Ascending aorta (tissue), 2 donors: ENCODE measurements at regions of chr15 and their contacts with region 1.

Region 1: GRCh38 chr15:45522328-45523160 is at the start of gene SLC30A4:
- DNase-seq: peak; percentile 15 to 84
- H3K4me3 ChIP-seq: peak within 1 kb of the TSS; percentile 85 to 92
- H3K27ac ChIP-seq: peak within 1 kb of the TSS; percentile 75 to 77
- H3K4me1 ChIP-seq: peaks cover 3 to 21% of the 10 kb centered on the region in 2 donors
- H3K27me3 ChIP-seq: no peaks in the 10 kb centered on the region
- CTCF ChIP-seq: peak in 2 of 3 experiments; percentile 20 to 59
- total RNA-seq, gene SLC30A4: 3.4 TPM

Region 2: DNA sequence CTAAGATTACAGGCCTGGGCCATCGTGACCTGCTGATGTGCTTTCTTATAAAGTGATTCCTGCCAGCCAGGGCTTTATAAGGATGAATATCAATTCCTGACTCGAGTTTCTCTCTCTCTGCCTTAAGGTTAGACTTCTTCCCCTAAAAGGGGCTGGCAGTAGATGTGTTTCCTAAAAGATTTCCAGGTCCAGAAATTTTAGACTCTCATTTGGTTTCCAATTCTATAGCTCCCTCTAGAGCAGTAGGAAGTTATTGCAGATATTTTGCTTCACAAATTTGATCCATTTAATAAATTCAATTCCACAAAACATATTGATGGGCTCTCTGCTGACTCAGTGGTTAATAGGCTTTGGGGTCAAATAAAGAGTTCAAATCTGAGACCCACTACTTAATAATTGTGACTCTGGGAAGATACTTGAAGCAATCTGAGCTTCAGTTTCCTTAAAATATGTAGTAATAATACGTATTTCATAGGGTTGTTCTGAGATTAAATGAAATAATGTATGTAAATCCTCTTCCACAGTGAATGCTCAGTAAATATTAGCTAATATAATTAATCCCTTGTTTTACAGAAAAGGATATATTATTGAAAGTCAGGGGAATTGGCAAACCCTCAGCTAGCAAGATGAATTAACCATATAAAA is 784.1 kb before region 1 on chr15:
- intact Hi-C with region 1: no loop called
- DNase-seq: no peak
- H3K4me3 ChIP-seq: no peak overlapping the region
- H3K27ac ChIP-seq: no peak overlapping the region
- H3K4me1 ChIP-seq: peaks cover 0 to 7% of the 10 kb centered on the region in 2 donors
- H3K27me3 ChIP-seq: no peaks in the 10 kb centered on the region
- CTCF ChIP-seq: peak; percentile 58 to 78 (median 76)

Region 3: DNA sequence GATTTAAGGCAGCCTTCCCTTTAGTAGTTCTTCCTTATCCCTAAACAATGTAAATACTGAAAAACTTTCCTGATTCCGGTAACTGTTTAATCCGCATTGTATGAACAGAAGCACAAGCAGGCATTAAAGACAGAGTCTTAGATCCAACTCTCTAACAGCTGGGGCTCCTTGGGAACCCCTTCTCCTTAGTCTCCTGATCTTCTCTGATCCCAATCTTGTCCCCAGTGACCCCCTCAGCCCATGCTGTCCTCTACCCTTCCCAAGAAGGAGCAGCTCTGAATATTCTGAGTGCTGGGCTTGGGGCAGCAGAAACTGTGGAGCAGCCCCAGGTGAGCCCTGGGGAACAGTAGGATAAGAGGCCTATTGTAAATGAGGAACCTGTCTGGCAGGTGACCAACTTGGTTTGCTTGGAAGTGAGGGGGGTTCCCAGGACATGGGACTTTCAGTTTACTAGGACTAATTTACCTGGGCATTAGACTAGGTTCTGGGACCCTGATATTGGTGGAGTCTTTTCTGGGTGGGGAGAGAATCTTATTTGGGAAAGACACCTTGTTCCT is 13.0 kb after region 1 on chr15:
- intact Hi-C with region 1: no loop called
- DNase-seq: no peak
- H3K4me3 ChIP-seq: no peak overlapping the region
- H3K27ac ChIP-seq: no peak overlapping the region
- H3K4me1 ChIP-seq: no peaks in the 10 kb centered on the region
- H3K27me3 ChIP-seq: no peaks in the 10 kb centered on the region
- CTCF ChIP-seq: no peak

Region 4: DNA sequence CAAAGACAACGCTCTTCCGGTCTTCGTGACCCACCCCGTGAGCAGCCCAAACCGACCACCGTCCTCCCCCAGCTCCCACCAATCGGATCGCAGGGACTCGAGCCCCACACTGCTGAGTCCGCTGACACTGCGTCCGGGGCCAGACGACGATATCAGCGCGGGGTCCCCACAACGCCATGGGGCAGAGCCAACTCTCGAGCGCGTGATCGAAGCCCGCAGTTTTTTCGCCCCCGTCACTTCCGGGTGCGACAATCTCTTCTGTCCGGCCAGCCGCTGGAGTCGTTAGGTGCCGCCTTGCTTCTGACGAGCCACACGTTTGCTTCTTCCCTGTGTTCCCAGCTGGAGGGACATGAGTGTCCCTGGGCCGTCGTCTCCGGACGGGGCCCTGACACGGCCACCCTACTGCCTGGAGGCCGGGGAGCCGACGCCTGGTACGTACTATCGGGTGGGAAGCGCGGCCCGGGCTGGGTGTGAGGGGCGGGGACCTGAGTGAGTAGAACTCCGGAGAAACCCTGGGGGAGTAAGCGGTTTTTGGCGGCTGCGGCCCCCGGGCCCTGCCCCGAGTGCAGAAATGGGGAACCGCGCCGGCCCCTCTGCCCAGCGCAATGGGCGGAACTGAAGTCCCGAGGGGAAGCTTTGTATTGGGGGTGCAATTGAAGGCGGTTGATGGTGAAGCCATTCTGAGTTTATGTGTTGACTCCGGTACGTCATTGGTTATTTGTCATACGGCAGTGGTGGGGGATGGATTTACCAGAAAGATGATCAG is 64.7 kb after region 1 on chr15 and contains the start of gene BLOC1S6:
- intact Hi-C with region 1: no loop called
- DNase-seq: peak; percentile 39 to 93
- H3K4me3 ChIP-seq: peak within 1 kb of the TSS; percentile 82 to 92
- H3K27ac ChIP-seq: peak within 1 kb of the TSS; percentile 97 to 99
- H3K4me1 ChIP-seq: peaks cover 3 to 33% of the 10 kb centered on the region in 2 donors
- H3K27me3 ChIP-seq: no peaks in the 10 kb centered on the region
- CTCF ChIP-seq: no peak
- total RNA-seq, gene BLOC1S6: 15.4 TPM

Region 5: GRCh38 chr15:45611305-45611704 is 88.8 kb after region 1 on chr15:
- intact Hi-C with region 1: loop called (anchors 5 kb)
- DNase-seq: no peak
- H3K4me3 ChIP-seq: no peak overlapping the region
- H3K27ac ChIP-seq: no peak overlapping the region
- H3K4me1 ChIP-seq: no peaks in the 10 kb centered on the region
- H3K27me3 ChIP-seq: no peaks in the 10 kb centered on the region
- CTCF ChIP-seq: peak in 1 of 3 experiments; percentile 27